ENCODE measurements at regions of chr3 and their contacts with region 1.

Region 1: GRCh38 chr3:66153481-66154443 is 67.0 kb upstream of the SLC25A26 start:
- DNase-seq: no peak
- ATAC-seq: peak; percentile 79

Region 2: GRCh38 chr3:66195347-66195783 is 41.6 kb after region 1 on chr3:
- intact Hi-C with region 1: loop called (anchors 5 kb)
- DNase-seq: peak; percentile 81
- ATAC-seq: peak; percentile 67

Measured in Right ventricle myocardium inferior (tissue), 1 donor.